OCI-LY7 (cell line): ENCODE measurements at regions of chr12 and their contacts with region 1.

Region 1: DNA sequence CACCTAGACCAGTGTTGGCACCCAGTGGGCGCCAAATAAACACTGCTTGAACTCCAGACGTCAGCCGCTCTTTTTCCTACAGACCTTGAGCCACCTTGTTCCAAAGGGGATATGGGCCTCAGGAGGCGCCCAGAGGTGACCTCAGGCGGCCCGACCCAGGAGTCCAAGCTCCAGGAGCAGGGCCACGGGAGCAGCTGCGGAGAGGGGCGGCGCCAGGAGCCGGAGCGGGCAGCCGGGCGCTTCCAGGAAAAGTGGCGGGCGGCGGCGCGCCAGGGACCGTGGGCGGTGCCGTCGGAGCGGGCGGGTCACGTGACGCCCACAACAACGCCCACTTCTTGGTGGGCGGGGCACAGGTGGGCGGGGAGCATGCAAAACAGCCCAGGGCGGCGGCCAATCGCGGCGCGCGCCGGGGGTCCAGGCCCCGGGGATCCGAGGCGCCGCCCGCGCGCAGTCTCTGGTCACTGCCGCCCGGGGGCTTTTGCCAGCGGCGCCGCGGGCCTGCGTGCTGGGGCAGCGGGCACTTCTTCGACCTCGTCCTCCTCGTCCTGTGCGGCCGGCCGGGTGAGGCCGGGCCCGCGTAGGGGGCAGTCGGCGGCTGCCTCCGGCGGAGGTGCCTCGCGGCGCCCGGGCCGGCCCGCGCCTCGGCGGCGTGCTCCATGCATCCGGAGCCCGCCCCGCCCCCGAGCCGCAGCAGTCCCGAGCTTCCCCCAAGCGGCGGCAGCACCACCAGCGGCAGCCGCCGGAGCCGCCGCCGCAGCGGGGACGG is at the start of gene ORAI1:
- DNase-seq: peak; percentile 97
- H3K4me3 ChIP-seq: peak within 1 kb of the TSS; percentile 69
- H3K27ac ChIP-seq: peak within 1 kb of the TSS; percentile 70
- H3K4me1 ChIP-seq: peaks cover 37% of the 10 kb centered on the region
- CTCF ChIP-seq: peak; percentile 9; the same call in 1 of the 2 replicates
- total RNA-seq, gene ORAI1: 3.3 and 9.5 TPM in 2 replicates

Region 2: DNA sequence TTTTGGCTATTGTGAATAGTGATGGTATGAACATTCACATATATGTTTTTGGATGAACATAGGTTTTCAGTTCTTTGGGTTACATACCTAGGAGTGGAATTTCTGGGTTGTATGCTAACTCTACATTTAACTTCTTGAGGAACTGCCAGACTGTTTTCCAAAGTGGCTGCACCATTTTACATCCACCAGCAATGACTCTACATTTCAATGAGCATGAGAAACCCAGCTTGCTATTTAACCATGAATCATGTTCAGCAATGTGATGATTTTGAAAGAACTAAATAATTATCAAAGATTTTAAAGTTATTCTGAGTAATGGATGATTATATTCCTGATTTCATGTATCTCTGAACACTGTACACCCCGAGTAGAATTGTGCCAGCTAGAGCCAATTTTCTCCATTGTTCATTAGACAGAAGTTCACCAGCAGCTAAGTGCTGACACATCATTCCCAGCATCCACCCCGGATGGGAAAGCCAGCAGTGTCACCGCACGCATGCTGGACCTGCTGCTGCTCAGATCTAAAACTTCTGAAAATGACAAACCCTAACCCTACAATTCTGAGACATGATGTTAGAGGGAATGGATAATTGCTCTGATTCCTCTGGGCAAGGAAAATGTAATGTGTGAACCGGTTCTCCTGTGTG is 260.7 kb before region 1 on chr12:
- CTCF ChIA-PET with region 1: no interaction called
- POLR2A ChIA-PET with region 1: no interaction called
- intact Hi-C with region 1: no loop called
- DNase-seq: no peak
- H3K4me3 ChIP-seq: no peak overlapping the region
- H3K27ac ChIP-seq: no peak overlapping the region
- H3K4me1 ChIP-seq: no peaks in the 10 kb centered on the region
- CTCF ChIP-seq: no peak

Region 3: DNA sequence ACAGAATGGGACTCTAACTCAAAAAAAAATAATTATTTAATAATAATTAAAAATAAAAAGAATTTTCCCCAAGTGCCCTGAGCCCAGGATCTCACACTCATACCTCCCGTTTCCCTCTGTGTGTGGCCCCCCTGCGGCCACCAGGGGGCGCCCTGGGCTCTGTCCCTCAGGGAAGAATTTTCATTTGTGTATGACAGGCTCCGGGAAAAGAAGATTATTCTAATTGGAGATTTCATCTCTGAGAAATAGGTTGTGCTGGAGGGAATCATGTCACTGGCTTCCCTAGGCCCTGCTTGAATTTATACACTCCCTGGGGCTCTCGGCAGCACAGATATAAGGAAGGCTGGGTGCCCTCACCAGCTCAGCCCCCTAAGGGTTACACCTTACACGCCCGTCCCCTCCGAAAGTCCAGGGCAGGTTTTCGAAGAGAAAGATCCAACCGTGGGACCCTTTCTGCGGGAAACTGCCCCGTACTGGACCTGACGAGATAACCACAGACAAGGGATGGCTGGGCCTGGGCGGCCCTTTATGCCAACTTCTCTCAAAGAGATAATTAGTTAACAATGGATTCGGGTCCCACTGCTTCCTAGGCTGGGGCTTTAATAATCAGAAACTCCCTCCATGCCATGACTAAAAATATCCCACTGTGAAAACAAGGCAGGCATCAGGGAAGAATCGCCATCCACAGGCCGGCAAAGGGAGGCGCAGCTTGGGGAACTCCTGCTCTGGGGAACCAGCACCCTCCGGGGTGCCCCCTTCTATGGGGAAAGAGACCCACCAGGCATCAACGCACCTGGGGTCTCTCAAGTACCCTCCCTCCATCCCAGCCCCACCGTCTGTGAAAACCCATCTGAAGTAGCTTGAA is 126.1 kb before region 1 on chr12:
- CTCF ChIA-PET with region 1: interaction called, 3 read pairs
- POLR2A ChIA-PET with region 1: interaction called, 4 read pairs
- intact Hi-C with region 1: loop called (anchors 1 kb)
- DNase-seq: peak; percentile 77
- H3K4me3 ChIP-seq: peak overlapping the region; percentile 45
- H3K27ac ChIP-seq: no peak overlapping the region
- H3K4me1 ChIP-seq: peaks cover 13% of the 10 kb centered on the region
- CTCF ChIP-seq: peak; percentile 96

Region 4: DNA sequence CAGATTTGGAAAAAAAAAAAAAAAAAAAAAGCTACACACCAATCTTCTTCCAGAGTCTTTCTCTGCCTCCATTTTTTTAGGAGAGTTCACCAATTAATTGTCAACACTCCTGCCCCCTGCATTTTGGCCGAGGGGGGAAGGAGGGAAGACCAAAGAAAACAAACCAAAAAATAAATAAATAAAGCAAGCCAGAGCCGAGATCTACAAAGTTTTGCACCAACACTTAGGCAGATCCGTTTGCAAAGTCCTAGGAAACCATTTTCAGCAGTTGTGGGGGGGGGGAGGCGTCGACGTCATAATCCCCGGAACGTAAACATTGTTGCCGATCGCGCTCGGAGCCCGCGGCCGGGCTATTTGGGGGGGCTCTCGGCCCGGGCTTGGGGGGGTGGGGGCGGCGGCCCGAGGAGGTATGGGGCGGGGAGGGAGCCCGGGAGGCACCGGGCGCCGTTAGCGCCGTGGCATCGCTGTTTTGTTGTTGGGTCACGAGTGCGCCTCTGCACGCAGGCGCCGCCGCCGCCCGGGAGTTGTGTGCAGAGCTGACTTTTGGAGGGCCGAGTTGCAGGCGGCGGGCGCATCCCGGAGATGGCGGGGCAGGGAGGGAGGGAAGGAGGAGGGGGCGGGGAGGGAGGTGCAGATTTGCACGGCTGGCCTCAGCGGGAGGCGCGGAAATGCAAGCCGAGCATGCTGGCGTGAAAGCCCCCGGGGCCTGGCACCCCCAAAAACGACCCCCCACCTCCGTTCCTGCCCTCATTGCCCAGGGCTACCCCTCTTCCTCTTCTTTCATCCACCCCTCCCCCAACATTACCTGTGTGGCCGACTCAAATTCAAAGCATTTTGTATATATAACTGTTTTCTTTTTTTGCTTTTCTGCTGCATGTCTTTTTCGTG is 46.0 kb before region 1 on chr12:
- CTCF ChIA-PET with region 1: interaction called, 3 read pairs
- POLR2A ChIA-PET with region 1: no interaction called
- intact Hi-C with region 1: loop called (anchors 1 kb)
- DNase-seq: peak; percentile 77
- H3K4me3 ChIP-seq: peak overlapping the region; percentile 79
- H3K27ac ChIP-seq: peak overlapping the region; percentile 78
- H3K4me1 ChIP-seq: peaks cover 29% of the 10 kb centered on the region
- CTCF ChIP-seq: no peak

Region 5: DNA sequence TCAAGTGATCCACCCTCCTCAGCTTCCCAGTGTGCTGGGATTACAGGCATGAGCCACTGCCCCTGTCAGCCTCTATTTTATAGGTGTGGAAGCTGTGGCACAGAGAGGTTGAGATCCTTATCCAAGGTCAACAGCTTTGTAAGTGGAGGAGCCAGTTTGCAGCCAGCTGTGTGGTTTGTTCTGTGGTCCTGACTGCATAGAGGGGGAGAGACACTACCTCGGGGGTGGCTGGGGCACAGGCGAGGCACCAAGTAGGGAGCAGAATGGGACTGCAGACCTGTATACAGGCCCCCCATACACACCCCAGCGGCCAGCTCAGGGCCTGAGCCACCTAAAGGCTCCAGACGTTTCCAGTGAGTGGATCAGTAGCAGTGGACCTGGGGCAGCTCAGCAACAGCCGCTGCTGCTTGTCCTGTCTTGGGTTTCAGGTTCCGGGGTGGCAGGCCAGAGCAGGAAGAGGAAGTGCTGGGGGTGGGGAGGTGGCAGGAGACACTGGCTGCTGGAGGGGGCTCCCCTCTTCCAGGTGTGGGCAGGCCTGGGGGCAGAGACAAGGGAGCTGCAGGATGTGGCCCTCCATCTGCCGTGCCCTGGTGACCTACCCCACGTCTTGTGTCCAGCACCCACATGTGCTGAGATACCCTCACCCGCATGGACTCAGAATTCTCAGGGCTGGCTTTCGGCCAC is 11.1 kb after region 1 on chr12:
- CTCF ChIA-PET with region 1: interaction called, 16 read pairs
- POLR2A ChIA-PET with region 1: interaction called, 10 read pairs
- intact Hi-C with region 1: no loop called
- DNase-seq: peak; percentile 75
- H3K4me3 ChIP-seq: peak overlapping the region; percentile 50
- H3K27ac ChIP-seq: peak overlapping the region; percentile 67
- H3K4me1 ChIP-seq: peaks cover 19% of the 10 kb centered on the region
- CTCF ChIP-seq: no peak

Region 6: GRCh38 chr12:121668750-121669520 is 42.7 kb after region 1 on chr12:
- CTCF ChIA-PET with region 1: no interaction called
- POLR2A ChIA-PET with region 1: interaction called, 4 read pairs
- intact Hi-C with region 1: loop called (anchors 2 kb)
- DNase-seq: peak; percentile 70
- H3K4me3 ChIP-seq: no peak overlapping the region
- H3K27ac ChIP-seq: no peak overlapping the region
- H3K4me1 ChIP-seq: peaks cover 30% of the 10 kb centered on the region
- CTCF ChIP-seq: peak; percentile 86

Region 7: DNA sequence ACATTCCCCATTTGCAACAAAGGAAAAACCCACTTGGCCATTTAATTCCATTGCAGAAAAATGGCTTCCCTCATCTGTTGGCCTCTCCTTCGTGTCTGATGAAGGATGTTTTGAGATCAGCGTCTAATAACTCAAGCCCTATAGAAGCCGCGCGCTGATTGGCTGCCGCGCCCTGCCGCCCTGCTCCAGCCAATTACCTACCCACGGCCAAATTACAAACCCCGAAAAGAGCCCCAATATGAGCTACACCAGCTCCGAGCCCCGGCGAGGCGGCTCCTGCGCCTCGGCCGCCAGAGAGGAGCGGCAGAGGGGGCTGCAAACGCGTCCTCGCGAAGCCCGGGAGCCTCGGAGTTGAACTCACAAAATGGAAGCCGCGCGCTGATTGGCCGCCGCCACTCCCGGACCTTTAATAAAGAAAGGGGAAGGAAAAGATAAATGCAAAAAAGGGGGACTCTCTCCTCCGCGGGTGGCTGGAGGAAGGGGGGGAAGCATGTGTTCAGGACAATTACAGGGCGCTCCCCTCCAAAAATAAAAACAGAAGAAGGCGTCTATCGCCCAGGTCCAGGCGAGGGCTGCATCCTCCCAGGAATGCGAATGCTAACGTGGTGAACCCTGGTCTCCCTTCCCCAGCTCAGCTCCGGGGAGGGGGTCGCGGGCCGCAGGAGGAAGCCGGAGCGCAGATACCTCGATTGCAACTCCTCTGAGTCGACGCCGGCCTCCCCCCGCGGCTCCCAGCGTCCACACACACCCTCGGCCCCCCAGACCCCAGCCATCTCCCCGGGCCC is 176.8 kb after region 1 on chr12:
- CTCF ChIA-PET with region 1: no interaction called
- POLR2A ChIA-PET with region 1: no interaction called
- intact Hi-C with region 1: loop called (anchors 5 kb)
- DNase-seq: peak; percentile 93
- H3K4me3 ChIP-seq: peak overlapping the region; percentile 75
- H3K27ac ChIP-seq: peak overlapping the region; percentile 95
- H3K4me1 ChIP-seq: peaks cover 69% of the 10 kb centered on the region
- CTCF ChIP-seq: no peak